MCF 10A (cell line): ENCODE measurements at regions of chr4 and their contacts with region 1.

Region 1: DNA sequence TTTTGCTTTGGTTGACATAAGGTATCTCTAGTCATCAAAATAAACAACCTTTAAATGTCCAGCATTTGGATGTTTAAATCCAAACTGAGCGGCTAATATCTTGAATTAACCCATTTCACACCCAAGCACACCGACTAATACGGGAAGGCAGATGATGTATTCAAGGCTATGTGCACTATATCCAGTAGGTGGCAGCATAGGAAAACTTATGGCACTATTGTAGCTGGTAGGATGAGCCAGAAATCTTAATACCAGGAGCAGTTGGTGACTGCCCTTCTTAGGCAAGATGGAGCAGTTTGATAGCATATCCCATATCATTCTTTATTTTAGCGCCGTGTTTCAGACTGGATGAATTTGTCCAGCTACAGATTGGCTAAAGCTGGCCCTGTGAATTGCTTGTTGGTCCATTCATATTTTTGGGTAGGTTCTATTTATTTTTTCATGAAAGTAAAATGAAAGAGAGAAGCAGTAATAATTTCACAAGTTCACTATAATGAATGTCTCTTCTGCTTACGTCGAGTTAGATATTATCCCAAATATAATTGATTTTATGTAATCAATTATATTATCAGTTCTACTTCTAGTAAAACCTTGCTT is 24.4 kb downstream of the UCHL1 start:
- DNase-seq: peak; percentile 91
- H3K4me3 Mint-ChIP-seq: no peak overlapping the region
- H3K27ac Mint-ChIP-seq: no peak overlapping the region
- H3K4me1 Mint-ChIP-seq: no peaks in the 10 kb centered on the region
- H3K27me3 Mint-ChIP-seq: no peaks in the 10 kb centered on the region
- CTCF ChIP-seq: peak; percentile 83

Region 2: DNA sequence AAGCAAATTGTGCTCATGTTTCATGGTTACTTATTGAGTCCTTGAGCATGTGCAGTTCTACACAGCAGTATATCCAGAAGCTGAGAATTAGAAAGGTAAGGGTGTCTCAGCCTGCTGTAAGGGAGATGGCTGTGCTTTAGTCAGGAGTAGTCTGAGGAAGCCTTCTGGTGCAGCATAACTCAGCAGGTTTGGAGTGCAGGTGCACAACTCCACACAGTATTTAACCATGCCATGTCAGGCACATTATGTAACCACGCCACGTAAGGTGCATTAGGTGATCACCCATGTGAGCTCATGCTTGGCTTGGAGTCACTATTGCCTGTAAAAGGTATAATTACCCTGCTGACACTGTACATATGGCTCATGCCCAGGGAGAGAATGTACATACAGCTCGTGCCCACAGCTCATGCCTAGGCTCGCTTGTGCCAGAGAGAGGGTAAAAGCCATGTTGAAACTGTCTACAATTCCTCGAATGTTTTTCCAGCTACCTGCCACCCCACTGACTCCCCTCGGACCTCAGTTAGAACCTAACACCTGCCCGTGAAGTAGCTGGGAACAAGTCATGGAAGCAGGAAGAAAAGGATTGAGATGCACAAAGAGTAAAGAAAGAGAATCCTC is 13.4 kb after region 1 on chr4:
- CTCF ChIA-PET with region 1: interaction called, 12 read pairs
- POLR2A ChIA-PET with region 1: interaction called, 3 read pairs
- intact Hi-C with region 1: no loop called
- DNase-seq: no peak
- H3K4me3 Mint-ChIP-seq: no peak overlapping the region
- H3K27ac Mint-ChIP-seq: no peak overlapping the region
- H3K4me1 Mint-ChIP-seq: peaks cover 4% of the 10 kb centered on the region
- H3K27me3 Mint-ChIP-seq: no peaks in the 10 kb centered on the region
- CTCF ChIP-seq: no peak

Region 3: DNA sequence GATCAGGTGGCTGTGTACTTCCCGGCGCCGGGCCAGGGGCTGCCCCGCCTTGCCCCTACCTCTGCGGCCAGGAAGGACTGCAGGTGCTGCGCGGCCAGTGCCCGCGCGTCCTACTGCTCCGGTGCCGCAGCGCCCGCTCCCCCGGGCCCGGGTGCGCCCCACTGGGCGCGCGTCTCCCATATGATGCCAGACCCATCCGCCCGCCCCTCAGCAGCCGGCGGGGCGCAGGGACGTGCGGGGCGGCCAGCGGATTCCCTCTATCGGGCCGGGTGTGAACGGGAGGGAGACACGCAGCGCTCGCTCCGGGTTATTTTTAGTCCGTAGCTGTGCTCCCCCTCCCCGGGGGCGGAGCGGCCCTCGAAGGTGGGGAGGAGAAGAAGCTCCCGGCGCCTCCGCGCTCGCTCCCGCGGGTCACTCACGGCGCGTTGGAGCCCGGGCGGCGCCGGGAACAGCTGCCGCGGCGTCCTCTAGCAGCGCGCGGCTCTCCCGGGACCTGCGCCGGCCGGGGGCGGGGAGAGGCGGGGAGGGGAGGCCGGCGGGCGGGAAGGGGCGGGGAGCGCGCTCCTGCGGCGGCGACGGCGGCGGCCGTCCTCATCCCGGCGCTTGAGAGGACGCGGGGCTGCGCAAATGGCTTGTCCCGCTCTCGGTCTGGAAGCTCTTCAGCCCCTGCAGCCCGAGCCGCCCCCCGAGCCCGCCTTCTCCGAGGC is 79.2 kb after region 1 on chr4:
- CTCF ChIA-PET with region 1: interaction called, 11 read pairs
- POLR2A ChIA-PET with region 1: no interaction called
- intact Hi-C with region 1: no loop called
- DNase-seq: peak; percentile 75
- H3K4me3 Mint-ChIP-seq: peak overlapping the region; percentile 89
- H3K27ac Mint-ChIP-seq: no peak overlapping the region
- H3K4me1 Mint-ChIP-seq: peaks cover 30% of the 10 kb centered on the region
- H3K27me3 Mint-ChIP-seq: no peaks in the 10 kb centered on the region
- CTCF ChIP-seq: no peak

Region 4: GRCh38 chr4:41661442-41662076 is 380.4 kb after region 1 on chr4:
- CTCF ChIA-PET with region 1: interaction called, 191 read pairs
- POLR2A ChIA-PET with region 1: interaction called, 19 read pairs
- intact Hi-C with region 1: loop called (anchors 1 kb)
- DNase-seq: peak; percentile 70
- H3K4me3 Mint-ChIP-seq: no peak overlapping the region
- H3K27ac Mint-ChIP-seq: peak overlapping the region; percentile 32
- H3K4me1 Mint-ChIP-seq: no peaks in the 10 kb centered on the region
- H3K27me3 Mint-ChIP-seq: no peaks in the 10 kb centered on the region
- CTCF ChIP-seq: peak; percentile 89